ENCODE measurements at regions of chr9 and their contacts with region 1.

Region 1: GRCh38 chr9:8419596-8420275 is 620.2 kb upstream of the DMAC1 start:
- DNase-seq: no peak
- H3K4me3 Mint-ChIP-seq: no peak overlapping the region
- H3K27ac Mint-ChIP-seq: no peak overlapping the region
- H3K4me1 Mint-ChIP-seq: no peaks in the 10 kb centered on the region
- H3K27me3 Mint-ChIP-seq: peaks cover 5% of the 10 kb centered on the region

Region 2: DNA sequence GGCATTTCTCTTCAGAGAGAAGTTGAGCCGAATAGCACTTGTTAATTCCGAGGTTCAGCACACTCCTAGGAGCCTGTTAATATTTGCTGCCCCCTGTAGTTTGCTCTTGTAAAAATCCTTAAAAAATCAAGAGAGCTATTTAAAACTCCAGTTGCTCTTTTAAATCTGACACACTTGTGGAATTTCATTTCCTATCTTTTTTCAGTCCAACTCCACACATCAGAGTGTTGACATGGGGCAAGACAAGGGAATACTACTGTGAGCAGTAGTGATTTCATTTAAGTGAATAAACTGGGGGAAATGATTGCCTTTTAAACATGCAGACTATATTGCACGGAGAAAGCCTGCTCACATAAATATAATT is 476.1 kb after region 1 on chr9:
- CTCF ChIA-PET with region 1: no interaction called
- intact Hi-C with region 1: loop called (anchors 10 kb)
- DNase-seq: no peak
- H3K4me3 Mint-ChIP-seq: no peak overlapping the region
- H3K27ac Mint-ChIP-seq: no peak overlapping the region
- H3K4me1 Mint-ChIP-seq: no peaks in the 10 kb centered on the region
- H3K27me3 Mint-ChIP-seq: peaks cover 6% of the 10 kb centered on the region

Region 3: GRCh38 chr9:9352877-9353481 is 933.2 kb after region 1 on chr9:
- CTCF ChIA-PET with region 1: no interaction called
- intact Hi-C with region 1: loop called (anchors 10 kb)
- DNase-seq: peak; percentile 6
- H3K4me3 Mint-ChIP-seq: no peak overlapping the region
- H3K27ac Mint-ChIP-seq: no peak overlapping the region
- H3K4me1 Mint-ChIP-seq: no peaks in the 10 kb centered on the region
- H3K27me3 Mint-ChIP-seq: no peaks in the 10 kb centered on the region